ENCODE measurements at regions of chr2 and their contacts with region 1.

Region 1: GRCh38 chr2:77013953-77014352 is 508.2 kb downstream of the LRRTM4 start:
- DNase-seq: no peak
- H3K4me3 ChIP-seq: no peak overlapping the region
- H3K27ac ChIP-seq: no peak overlapping the region
- H3K4me1 ChIP-seq: no peaks in the 10 kb centered on the region
- H3K27me3 ChIP-seq: no peaks in the 10 kb centered on the region
- CTCF ChIP-seq: no peak
- EP300 ChIP-seq: no peak
- POLR2A ChIP-seq: no peak

Region 2: GRCh38 chr2:77054938-77055337 is 41.0 kb after region 1 on chr2:
- intact Hi-C with region 1: loop called (anchors 2 kb)
- DNase-seq: no peak
- H3K4me3 ChIP-seq: no peak overlapping the region
- H3K27ac ChIP-seq: no peak overlapping the region
- H3K4me1 ChIP-seq: no peaks in the 10 kb centered on the region
- H3K27me3 ChIP-seq: no peaks in the 10 kb centered on the region
- CTCF ChIP-seq: no peak
- EP300 ChIP-seq: no peak
- POLR2A ChIP-seq: no peak

Measured in sigmoid colon (tissue), 7 donors.